ENCODE measurements at regions of chr10 and their contacts with region 1.

Region 1: GRCh38 chr10:97037365-97038361 is 148.1 kb downstream of the SLIT1 start:
- DNase-seq: peak; percentile 79 to 86 (median 86)
- H3K4me3 ChIP-seq: peak overlapping the region in 6 of 7 experiments; percentile 43 to 82 (median 70)
- H3K27ac ChIP-seq: no peak overlapping the region
- H3K4me1 ChIP-seq: peaks cover 0 to 9% (median 7%) of the 10 kb centered on the region in 4 experiments
- H3K27me3 ChIP-seq: no peaks in the 10 kb centered on the region

Region 2: GRCh38 chr10:96651998-96652431 is 385.6 kb before region 1 on chr10:
- CTCF ChIA-PET with region 1: no interaction called
- POLR2A ChIA-PET with region 1: no interaction called
- DNase-seq: peak; percentile 90 to 97 (median 96)
- H3K4me3 ChIP-seq: peak overlapping the region in 2 of 7 experiments; percentile 6 to 38
- H3K27ac ChIP-seq: peak overlapping the region in 1 of 2 experiments; percentile 40
- H3K4me1 ChIP-seq: peaks cover 14 to 67% (median 40%) of the 10 kb centered on the region in 4 experiments
- H3K27me3 ChIP-seq: no peaks in the 10 kb centered on the region

Region 3: DNA sequence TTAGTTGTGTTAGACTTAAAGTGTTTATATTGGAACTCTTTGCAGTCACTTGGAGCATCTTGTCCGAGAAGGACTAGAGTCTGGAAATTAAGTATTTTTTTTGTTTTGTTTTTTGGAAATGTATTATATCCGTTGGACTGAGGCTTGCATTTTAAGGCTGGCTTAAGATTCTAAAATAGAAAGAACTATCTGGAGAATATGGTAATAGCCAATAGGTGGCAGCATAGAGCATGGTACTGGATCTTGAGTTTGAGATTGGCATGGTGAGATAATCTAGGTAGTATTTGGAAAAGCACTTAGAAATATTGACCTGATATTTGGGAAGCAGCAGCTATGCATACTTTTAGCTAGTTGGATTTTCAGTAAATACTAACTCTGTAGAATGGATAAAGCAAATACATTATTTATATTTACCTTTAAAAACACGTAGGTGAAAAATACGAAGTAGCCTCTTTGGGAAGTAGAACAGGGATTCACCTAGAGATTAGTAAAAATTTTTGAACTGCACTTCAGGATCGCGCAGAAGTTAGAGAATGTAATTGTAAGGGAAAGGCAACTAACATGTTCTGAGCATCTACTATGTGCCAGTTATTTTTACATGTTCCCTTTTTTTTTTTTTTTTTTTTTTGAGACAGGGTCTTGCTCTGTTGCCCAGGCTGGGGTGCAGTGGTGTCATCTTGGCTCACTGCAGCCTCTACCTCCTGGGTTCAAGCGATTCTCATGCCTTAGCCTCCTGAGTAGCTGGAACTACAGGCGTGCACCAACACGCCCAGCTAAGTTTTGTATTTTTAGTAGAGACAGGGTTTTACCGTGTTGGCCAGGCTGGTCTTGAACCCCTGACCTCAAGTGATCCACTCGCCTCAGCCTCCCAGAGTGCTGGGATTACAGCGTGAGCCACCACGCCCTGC is 126.9 kb before region 1 on chr10:
- CTCF ChIA-PET with region 1: interaction called, 13 read pairs
- POLR2A ChIA-PET with region 1: no interaction called
- DNase-seq: peak; percentile 64 to 78 (median 69)
- H3K4me3 ChIP-seq: no peak overlapping the region
- H3K27ac ChIP-seq: no peak overlapping the region
- H3K4me1 ChIP-seq: no peaks in the 10 kb centered on the region
- H3K27me3 ChIP-seq: no peaks in the 10 kb centered on the region

Region 4: GRCh38 chr10:97048649-97049427 is 11.2 kb after region 1 on chr10:
- CTCF ChIA-PET with region 1: interaction called, 14 read pairs
- POLR2A ChIA-PET with region 1: no interaction called
- DNase-seq: no peak
- H3K4me3 ChIP-seq: no peak overlapping the region
- H3K27ac ChIP-seq: no peak overlapping the region
- H3K4me1 ChIP-seq: no peaks in the 10 kb centered on the region
- H3K27me3 ChIP-seq: peaks cover 0 to 5% (median 0%) of the 10 kb centered on the region in 5 experiments

Region 5: GRCh38 chr10:97059006-97059871 is 21.6 kb after region 1 on chr10:
- CTCF ChIA-PET with region 1: interaction called, 22 read pairs
- POLR2A ChIA-PET with region 1: no interaction called
- DNase-seq: no peak
- H3K4me3 ChIP-seq: no peak overlapping the region
- H3K27ac ChIP-seq: no peak overlapping the region
- H3K4me1 ChIP-seq: no peaks in the 10 kb centered on the region
- H3K27me3 ChIP-seq: peaks cover 0 to 2% (median 0%) of the 10 kb centered on the region in 5 experiments